ENCODE measurements at regions of chr1 and their contacts with region 1.

Region 1: GRCh38 chr1:145978854-145979759 is 14.6 kb downstream of the POLR3GL start:
- DNase-seq: peak; percentile 80
- ATAC-seq: peak; percentile 93
- H3K4me3 Mint-ChIP-seq: no peak overlapping the region
- H3K27ac Mint-ChIP-seq: no peak overlapping the region
- H3K4me1 Mint-ChIP-seq: peaks cover 18% of the 10 kb centered on the region
- H3K27me3 Mint-ChIP-seq: no peaks in the 10 kb centered on the region; the same call in 1 of the 2 replicates
- CTCF ChIP-seq: no peak

Region 2: DNA sequence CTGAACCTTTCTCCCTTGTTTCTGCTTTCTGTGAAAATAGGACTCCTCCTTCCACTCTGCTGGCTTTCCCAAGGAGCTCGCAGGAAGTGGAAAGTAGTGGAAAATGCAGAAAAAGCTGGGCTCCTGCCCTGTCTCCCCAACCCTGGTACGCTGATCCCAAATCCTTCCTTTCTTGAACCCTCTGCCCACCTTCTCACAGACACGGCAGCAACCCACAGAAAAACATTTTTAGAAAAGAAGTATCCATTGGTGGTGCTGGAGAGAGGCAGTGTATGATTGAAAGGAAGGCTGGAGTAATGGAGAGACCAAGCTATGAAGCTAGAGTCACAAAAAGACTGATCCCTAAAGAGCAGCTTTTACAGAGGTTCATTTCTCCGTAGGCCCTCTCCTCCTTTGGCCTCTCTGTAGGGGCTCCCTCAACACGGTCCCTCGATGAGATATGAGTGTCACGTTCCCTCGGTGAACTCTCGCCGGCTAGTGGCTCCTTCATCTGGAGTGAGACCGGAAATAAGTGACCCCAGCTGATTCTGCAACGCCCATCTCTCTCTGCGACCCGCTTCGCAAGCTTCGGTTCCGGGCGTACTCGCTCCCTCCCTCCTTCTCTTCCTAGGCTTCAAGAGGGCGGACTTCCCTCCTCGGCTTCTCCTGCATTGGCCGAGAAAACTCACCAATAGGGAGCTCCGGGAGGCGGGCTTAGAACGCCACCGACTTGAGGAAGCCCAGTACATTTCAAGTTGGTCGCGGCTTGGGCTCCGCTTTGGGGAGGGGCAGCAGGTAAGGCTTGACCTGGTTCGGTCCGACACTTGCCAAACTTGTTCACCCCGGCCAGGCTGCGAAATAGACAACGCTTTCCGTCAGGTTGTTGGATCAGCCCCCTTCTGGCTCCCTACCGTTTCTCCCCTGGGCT is 14.9 kb before region 1 on chr1 and contains the starts of genes ANKRD34A and POLR3GL:
- CTCF ChIA-PET with region 1: interaction called, 51 read pairs
- POLR2A ChIA-PET with region 1: interaction called, 17 read pairs
- DNase-seq: peak; percentile 96
- ATAC-seq: peak; percentile 85
- H3K4me3 Mint-ChIP-seq: peak within 1 kb of the TSS; percentile 91
- H3K27ac Mint-ChIP-seq: peak within 1 kb of the TSS; percentile 68; the same call in 1 of the 2 replicates
- H3K4me1 Mint-ChIP-seq: peaks cover 38% of the 10 kb centered on the region
- H3K27me3 Mint-ChIP-seq: peaks cover 70% of the 10 kb centered on the region
- CTCF ChIP-seq: no peak
- total RNA-seq, gene ANKRD34A: 0.21 to 0.44 TPM (median 0.22 TPM) in 3 replicates
- total RNA-seq, gene POLR3GL: 3.8 to 8.3 TPM (median 6.7 TPM) in 3 replicates

Region 3: GRCh38 chr1:145996433-145997015 is 17.4 kb after region 1 on chr1 and contains the start of gene TXNIP:
- CTCF ChIA-PET with region 1: interaction called, 21 read pairs
- POLR2A ChIA-PET with region 1: interaction called, 5 read pairs
- DNase-seq: peak; percentile 99
- ATAC-seq: peak; percentile 97
- H3K4me3 Mint-ChIP-seq: peak within 1 kb of the TSS; percentile 98
- H3K27ac Mint-ChIP-seq: peak within 1 kb of the TSS; percentile 97
- H3K4me1 Mint-ChIP-seq: peaks cover 65% of the 10 kb centered on the region
- H3K27me3 Mint-ChIP-seq: no peaks in the 10 kb centered on the region
- CTCF ChIP-seq: no peak
- total RNA-seq, gene TXNIP: 56.7 to 76.8 TPM (median 73.8 TPM) in 3 replicates

Region 4: DNA sequence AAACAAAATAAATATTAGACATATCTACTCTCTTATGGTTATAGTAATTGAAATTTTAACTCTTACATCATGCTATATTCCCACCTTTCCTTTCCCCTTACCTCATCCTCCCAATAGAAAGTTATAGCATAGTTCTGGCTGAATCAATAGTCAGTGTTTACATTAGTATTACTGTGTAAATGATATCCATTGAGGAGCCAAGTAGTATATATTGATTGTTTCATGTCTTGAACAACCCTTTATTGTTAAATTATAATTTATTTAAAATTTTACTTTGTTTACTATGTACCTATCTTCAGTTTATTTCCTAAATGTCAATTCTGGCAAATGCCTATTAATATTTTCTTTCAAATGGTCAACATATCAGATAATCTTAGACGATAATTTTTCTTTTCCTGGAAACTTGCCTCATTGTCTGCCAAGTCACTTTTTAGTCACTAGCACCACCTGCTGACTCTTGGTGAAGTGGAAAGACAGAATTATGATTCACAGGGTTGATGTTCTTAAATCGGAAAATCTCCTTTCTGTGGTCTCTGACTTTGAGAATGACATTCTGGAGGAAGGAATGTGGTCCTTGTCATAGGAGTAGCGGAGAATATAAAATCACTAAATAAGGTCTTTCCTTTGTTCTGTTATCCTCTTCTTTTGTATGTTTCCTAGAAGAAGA is 33.8 kb after region 1 on chr1:
- CTCF ChIA-PET with region 1: interaction called, 46 read pairs
- POLR2A ChIA-PET with region 1: interaction called, 6 read pairs
- DNase-seq: no peak
- ATAC-seq: no peak
- H3K4me3 Mint-ChIP-seq: no peak overlapping the region
- H3K27ac Mint-ChIP-seq: no peak overlapping the region
- H3K4me1 Mint-ChIP-seq: no peaks in the 10 kb centered on the region
- H3K27me3 Mint-ChIP-seq: peaks cover 21% of the 10 kb centered on the region
- CTCF ChIP-seq: no peak

Region 5: GRCh38 chr1:146036965-146037646 is 58.0 kb after region 1 on chr1:
- CTCF ChIA-PET with region 1: interaction called, 25 read pairs
- POLR2A ChIA-PET with region 1: interaction called, 5 read pairs
- DNase-seq: peak; percentile 82
- ATAC-seq: peak; percentile 16
- H3K4me3 Mint-ChIP-seq: peak overlapping the region; percentile 100
- H3K27ac Mint-ChIP-seq: peak overlapping the region; percentile 78
- H3K4me1 Mint-ChIP-seq: peaks cover 10% of the 10 kb centered on the region
- H3K27me3 Mint-ChIP-seq: peaks cover 4% of the 10 kb centered on the region; the same call in 1 of the 2 replicates
- CTCF ChIP-seq: no peak

Measured in WTC11 (cell line).